Head of caudate nucleus (tissue), 42 donors: ENCODE measurements at regions of chr5 and their contacts with region 1.

Region 1: GRCh38 chr5:178940569-178941360 is at the start of gene ZNF454:
- DNase-seq: peak; percentile 93 to 99 (median 96)

Region 2: GRCh38 chr5:178626484-178627258 is 314.1 kb before region 1 on chr5 and contains the start of gene CLK4:
- intact Hi-C with region 1: loop called (anchors 5 kb)
- DNase-seq: peak; percentile 88 to 98 (median 96)

Region 3: DNA sequence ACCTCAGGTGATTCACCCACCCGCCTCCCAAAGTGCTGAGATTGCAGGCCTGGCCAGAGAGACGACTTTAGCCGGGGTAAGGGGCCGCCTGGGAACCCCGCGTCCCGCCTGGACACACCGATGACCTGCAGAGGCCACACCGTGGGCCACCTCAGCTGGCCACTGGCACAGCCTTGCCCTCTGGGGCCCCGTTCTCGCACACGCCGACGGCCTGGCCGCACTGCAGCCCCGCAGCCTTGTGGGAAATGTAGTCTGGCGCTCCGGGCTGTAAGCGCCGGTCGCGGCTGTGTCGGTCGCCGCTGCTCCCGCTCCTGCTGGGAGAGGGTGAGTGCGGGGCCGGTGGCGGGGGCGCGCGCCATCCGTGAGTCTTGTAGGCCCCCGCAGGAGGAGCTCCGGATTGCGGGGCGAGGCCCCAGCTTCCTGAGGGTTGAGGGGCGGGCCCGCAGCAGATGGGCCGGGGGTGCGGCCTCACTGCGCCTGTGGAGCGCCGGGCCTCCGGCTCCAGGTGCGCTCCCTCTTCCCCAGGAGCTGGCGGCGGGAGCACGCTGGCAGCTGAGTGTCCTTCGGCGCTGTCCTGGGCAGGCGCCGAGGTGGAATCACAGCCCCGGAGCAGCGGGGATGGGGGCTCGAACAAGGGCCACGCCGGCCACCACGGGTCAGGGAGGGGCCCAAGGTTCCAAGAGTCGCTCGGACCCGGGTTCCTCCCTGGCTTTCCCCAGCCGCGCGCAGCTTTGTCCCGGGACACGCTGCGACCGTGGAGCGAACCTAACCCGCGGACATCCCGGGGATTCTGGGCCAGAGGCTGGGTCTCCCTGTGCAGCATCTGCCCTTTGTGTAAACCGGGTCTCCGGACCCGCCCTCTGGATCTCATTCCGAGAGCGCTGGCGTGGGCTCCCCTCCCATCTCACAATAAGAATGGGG is 44.9 kb before region 1 on chr5 and contains the start of gene ZFP2:
- intact Hi-C with region 1: loop called (anchors 2 kb)
- DNase-seq: peak; percentile 42 to 91 (median 78)

Region 4: GRCh38 chr5:178994580-178995340 is 54.0 kb after region 1 on chr5 and contains the start of gene GRM6:
- intact Hi-C with region 1: no loop called
- DNase-seq: no peak

Region 5: GRCh38 chr5:179023528-179024430 is 83.0 kb after region 1 on chr5 and contains the start of gene ZNF879:
- intact Hi-C with region 1: loop called (anchors 2 kb)
- DNase-seq: peak; percentile 88 to 99 (median 96)

Region 6: GRCh38 chr5:179060116-179061008 is 119.6 kb after region 1 on chr5 and contains the start of gene ZNF354C:
- intact Hi-C with region 1: loop called (anchors 10 kb)
- DNase-seq: peak; percentile 80 to 96 (median 92)